ENCODE measurements at regions of chr13 and their contacts with region 1.

Region 1: DNA sequence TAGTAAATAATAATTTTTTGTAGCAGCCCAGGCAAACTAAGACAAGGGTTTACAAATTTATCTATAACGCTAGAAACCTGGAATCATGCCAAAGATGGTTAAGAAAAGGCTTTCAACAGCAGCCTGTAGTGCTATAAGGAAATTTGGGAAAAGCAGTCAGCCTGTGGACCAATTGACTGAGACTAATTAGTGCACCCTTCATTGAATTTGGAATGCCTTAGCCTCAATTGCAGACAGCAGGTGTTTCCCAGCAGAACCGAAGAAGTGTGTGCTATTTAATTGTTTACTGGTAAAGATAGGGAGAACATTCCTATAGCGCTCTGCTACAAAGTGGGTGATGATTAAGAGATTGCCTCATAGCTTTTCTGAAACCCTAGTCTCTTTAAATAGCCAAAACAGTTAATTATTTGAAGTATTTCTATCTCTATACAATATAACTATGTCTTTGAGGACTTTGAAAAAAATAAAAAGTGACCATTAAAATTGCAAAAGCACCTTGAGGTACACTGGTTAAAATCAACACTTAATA is 1884.3 kb upstream of the PCDH20 start:
- DNase-seq: no peak
- ATAC-seq: no peak
- H3K4me3 ChIP-seq: no peak overlapping the region
- H3K27ac ChIP-seq: no peak overlapping the region
- H3K4me1 ChIP-seq: no peaks in the 10 kb centered on the region
- H3K27me3 ChIP-seq: no peaks in the 10 kb centered on the region
- CTCF ChIP-seq: no peak

Region 2: GRCh38 chr13:62613819-62614218 is 686.1 kb before region 1 on chr13:
- CTCF ChIA-PET with region 1: no interaction called
- POLR2A ChIA-PET with region 1: interaction called, 13 read pairs
- intact Hi-C with region 1: no loop called
- DNase-seq: no peak
- ATAC-seq: no peak
- H3K4me3 ChIP-seq: no peak overlapping the region
- H3K27ac ChIP-seq: no peak overlapping the region
- H3K4me1 ChIP-seq: no peaks in the 10 kb centered on the region
- H3K27me3 ChIP-seq: no peaks in the 10 kb centered on the region
- CTCF ChIP-seq: no peak

Region 3: DNA sequence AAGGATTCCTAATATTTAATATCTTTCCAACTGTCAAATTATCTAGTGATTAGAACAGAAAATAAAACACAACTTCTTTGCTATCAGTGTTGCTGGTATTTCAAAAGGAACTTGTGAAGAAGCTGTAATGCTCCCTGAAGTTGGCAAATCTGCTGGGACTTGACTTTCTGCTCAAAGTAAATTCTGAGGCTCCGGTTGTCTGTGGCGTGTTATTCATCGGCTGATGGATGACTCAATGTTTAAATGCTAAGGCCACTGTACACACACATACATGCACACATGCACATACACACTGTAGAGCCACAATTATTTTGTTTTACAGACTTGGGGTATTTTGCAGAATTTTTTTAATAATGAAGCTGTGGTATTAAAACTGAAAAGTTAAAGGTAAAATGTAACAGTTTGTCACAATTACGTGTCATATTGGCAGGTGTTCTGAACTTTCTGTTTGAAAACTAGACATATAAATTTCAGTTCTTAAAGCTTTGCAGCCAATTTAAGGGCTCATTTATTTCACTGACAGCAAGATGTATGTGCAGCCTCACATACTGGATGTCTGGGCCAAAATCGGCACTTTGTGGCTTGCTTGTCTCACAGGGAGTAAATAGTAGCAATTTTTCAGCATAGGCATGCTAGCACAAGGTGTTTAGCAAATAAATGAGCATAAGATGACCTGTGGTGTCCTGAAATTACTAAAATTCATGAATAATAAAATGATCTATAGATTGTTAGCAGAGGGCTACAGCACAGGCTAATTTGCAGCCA is 192.6 kb before region 1 on chr13:
- CTCF ChIA-PET with region 1: no interaction called
- POLR2A ChIA-PET with region 1: no interaction called
- intact Hi-C with region 1: no loop called
- DNase-seq: peak; percentile 33
- ATAC-seq: peak; percentile 91
- H3K4me3 ChIP-seq: 0 out of 2 replicates have a peak overlapping the region, but pooled peaks have one; percentile 18
- H3K27ac ChIP-seq: no peak overlapping the region
- H3K4me1 ChIP-seq: no peaks in the 10 kb centered on the region
- H3K27me3 ChIP-seq: no peaks in the 10 kb centered on the region
- CTCF ChIP-seq: no peak

Measured in PC-3 (cell line).